Mammary epithelial cell (primary cell): ENCODE measurements at regions of chr3 and their contacts with region 1.

Region 1: GRCh38 chr3:74789111-74789510 is 174.7 kb upstream of the CNTN3 start:
- DNase-seq: peak; percentile 83
- H3K4me3 ChIP-seq: no peak overlapping the region
- H3K27ac ChIP-seq: peak overlapping the region; percentile 35
- H3K4me1 ChIP-seq: no peaks in the 10 kb centered on the region
- H3K27me3 ChIP-seq: no peaks in the 10 kb centered on the region
- CTCF ChIP-seq: no peak

Region 2: GRCh38 chr3:74636602-74637380 is 152.3 kb before region 1 on chr3:
- CTCF ChIA-PET with region 1: no interaction called
- dilution Hi-C with region 1: no loop called
- in situ Hi-C with region 1: no loop called
- intact Hi-C with region 1: loop called (anchors 5 kb)
- DNase-seq: no peak
- H3K4me3 ChIP-seq: no peak overlapping the region
- H3K27ac ChIP-seq: no peak overlapping the region
- H3K4me1 ChIP-seq: peaks cover 29% of the 10 kb centered on the region
- H3K27me3 ChIP-seq: no peaks in the 10 kb centered on the region
- CTCF ChIP-seq: no peak

Region 3: DNA sequence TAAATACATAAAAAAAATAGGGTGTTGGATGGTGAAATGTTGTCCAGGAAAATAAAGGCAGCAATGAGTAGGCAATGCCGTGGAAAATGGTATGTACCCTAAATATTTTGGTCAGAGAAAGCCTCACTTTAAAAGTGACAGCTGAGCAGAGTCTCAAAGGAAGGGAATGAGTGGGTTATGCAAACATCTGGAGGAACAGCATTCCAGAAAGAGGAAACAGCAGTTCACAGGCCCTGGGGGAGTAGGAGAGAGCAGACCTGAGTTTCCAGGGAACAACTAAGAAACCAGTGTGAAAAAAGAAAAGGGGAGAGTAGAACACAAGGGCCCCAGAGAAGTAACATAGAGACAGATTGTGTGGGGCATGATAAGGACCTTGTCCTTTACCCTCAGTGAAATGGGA is 55.3 kb after region 1 on chr3:
- CTCF ChIA-PET with region 1: no interaction called
- dilution Hi-C with region 1: no loop called
- in situ Hi-C with region 1: no loop called
- intact Hi-C with region 1: loop called (anchors 1 kb)
- DNase-seq: peak; percentile 60
- H3K4me3 ChIP-seq: no peak overlapping the region
- H3K27ac ChIP-seq: peak overlapping the region; percentile 67
- H3K4me1 ChIP-seq: peaks cover 18% of the 10 kb centered on the region
- H3K27me3 ChIP-seq: no peaks in the 10 kb centered on the region
- CTCF ChIP-seq: no peak